ENCODE measurements at regions of chr17 and their contacts with region 1.

Region 1: DNA sequence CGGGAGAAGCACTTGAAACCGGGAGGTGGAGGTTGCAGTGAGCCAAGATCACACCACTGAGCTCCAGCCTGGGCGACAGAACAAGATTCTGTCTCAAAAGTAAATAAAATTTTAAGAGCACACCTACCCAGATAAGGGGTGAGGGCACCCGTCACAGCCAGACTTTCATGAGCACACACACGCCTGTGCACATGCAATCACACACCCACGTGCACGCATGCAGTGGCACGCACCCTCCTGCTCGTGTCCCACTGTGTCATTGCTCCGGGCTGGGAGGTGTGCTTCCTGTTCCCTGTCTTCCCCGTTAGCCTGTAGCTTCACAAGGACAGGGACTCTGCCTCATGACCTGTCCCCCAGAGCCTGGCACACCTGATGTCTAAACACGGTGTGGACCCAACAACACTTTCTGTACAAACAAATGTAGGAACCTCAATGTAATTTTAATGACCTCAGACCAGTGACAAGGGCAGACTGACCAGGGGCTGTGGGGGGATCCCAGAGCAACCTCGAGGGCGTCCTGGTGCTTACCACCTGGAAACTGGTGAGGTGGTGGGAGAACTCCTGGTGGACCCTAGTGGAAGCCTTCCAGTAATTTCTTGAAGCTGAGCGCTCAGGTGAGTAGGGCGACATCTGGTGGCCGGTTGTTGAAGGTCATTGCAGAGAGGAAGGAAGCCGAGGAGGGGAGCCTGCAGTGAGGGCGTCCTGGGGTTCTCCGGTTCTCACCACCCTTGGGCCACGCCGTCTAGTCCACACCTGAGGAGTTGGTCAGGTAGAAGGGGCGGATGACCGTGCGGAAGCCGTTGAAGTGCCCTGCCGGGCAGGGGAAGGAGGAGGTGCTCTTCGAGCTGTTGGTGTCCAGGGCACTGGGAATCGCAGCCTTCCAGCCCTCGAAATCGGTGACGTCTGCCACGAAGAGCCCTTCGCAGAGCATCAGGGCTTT is 8.6 kb downstream of the LGALS3BP start:
- DNase-seq: peak; percentile 79 to 88 (median 83)
- H3K4me3 ChIP-seq: no peak overlapping the region
- H3K27ac ChIP-seq: no peak overlapping the region
- H3K4me1 ChIP-seq: peaks cover 0 to 9% (median 5%) of the 10 kb centered on the region in 4 experiments
- H3K27me3 ChIP-seq: no peaks in the 10 kb centered on the region

Region 2: GRCh38 chr17:78873519-78874340 is 97.4 kb before region 1 on chr17:
- CTCF ChIA-PET with region 1: interaction called, 20 read pairs
- POLR2A ChIA-PET with region 1: no interaction called
- DNase-seq: peak; percentile 42 to 68 (median 54)
- H3K4me3 ChIP-seq: peak overlapping the region in 2 of 7 experiments; percentile 22 to 23
- H3K27ac ChIP-seq: no peak overlapping the region
- H3K4me1 ChIP-seq: peaks cover 7 to 54% (median 42%) of the 10 kb centered on the region in 4 experiments
- H3K27me3 ChIP-seq: no peaks in the 10 kb centered on the region

Region 3: DNA sequence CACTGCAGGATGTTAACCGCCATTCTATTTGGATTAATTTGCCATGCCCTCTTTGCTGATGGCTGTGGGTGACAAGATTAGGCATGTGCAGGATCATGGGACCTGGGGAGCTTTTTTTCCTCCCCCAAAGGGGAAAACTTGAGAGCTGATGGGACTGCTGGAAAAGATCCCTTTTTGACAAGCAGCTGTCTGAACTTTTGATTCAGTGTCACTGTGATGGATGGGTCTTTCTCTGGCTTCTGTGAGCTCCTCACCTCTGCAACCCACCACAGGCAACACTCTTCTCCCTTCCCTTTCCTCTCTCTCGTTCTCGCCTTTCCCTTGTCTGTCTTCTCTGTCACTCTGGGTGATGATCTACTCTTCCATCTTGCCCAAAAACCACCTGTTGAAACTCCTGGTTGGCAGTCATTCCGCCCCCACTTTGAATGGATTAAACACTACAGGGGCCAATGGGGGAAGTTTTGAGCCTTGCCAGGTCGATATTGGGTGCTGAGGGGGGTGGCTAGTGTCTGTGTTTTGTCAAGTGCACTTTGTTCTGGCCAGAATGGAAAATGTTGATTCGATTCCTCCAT is 41.5 kb after region 1 on chr17:
- CTCF ChIA-PET with region 1: no interaction called
- POLR2A ChIA-PET with region 1: no interaction called
- DNase-seq: no peak
- H3K4me3 ChIP-seq: no peak overlapping the region
- H3K27ac ChIP-seq: no peak overlapping the region
- H3K4me1 ChIP-seq: peaks cover 9 to 26% (median 24%) of the 10 kb centered on the region in 4 experiments
- H3K27me3 ChIP-seq: no peaks in the 10 kb centered on the region

Region 4: GRCh38 chr17:79023886-79024771 is 53.0 kb after region 1 on chr17 and contains the start of gene C1QTNF1:
- CTCF ChIA-PET with region 1: no interaction called
- POLR2A ChIA-PET with region 1: no interaction called
- DNase-seq: peak in 2 of 3 donors; percentile 34 to 50
- H3K4me3 ChIP-seq: peak within 1 kb of the TSS; percentile 39 to 76 (median 57)
- H3K27ac ChIP-seq: no peak within 1 kb of the TSS
- H3K4me1 ChIP-seq: peaks cover 0 to 19% (median 14%) of the 10 kb centered on the region in 4 experiments
- H3K27me3 ChIP-seq: peaks cover 0 to 63% (median 37%) of the 10 kb centered on the region in 5 experiments

Region 5: GRCh38 chr17:79045842-79046196 is 74.7 kb after region 1 on chr17:
- CTCF ChIA-PET with region 1: no interaction called
- POLR2A ChIA-PET with region 1: no interaction called
- DNase-seq: peak; percentile 59 to 73 (median 70)
- H3K4me3 ChIP-seq: no peak overlapping the region
- H3K27ac ChIP-seq: no peak overlapping the region
- H3K4me1 ChIP-seq: no peaks in the 10 kb centered on the region
- H3K27me3 ChIP-seq: peaks cover 0 to 2% (median 0%) of the 10 kb centered on the region in 5 experiments